Left colon (tissue), 2 donors: ENCODE measurements at regions of chr1 and their contacts with region 1.

Region 1: DNA sequence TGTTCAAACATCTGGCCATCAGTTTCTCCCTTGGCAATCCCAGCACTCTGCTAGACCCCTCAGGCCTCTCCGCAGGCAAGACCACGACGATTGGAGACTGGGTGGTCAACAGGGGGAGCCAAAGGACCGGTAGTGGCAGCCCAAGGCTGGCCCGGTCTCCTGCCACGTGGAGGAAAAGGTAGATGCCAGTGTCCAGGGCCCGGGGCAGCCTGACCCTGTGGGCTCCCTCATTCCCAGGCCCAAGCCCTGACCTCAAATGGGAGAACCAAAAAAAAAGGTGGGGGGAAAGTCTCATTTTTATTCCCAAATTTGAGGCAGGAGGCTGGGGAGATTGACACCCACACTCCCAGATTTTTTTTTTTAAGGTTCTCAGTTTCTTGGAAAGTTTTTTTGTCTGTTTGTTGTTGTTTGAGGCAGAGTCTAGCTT is 24.8 kb downstream of the S100A6 start:
- DNase-seq: peak; percentile 83 to 90
- ATAC-seq: peak; percentile 60

Region 2: DNA sequence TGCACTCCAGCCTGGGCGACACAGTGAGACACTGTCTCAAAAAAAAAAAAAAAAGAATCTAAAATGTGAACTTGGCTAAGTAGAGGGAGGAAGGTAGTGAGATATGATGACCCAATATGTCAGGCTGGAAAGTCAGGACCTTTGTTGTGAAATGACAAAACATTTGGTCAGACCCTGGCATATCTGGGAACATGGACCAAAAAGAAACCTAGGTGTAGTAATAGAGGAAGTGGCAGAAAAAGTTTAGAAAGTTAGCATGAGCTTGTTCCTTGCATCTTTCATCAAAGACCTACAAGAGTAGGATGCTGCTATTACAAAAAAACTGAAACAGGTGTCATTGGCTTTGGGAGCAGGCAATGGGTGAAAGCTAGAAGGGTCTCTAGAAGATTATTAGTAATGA is 45.4 kb after region 1 on chr1:
- intact Hi-C with region 1: no loop called
- DNase-seq: no peak
- ATAC-seq: no peak

Region 3: DNA sequence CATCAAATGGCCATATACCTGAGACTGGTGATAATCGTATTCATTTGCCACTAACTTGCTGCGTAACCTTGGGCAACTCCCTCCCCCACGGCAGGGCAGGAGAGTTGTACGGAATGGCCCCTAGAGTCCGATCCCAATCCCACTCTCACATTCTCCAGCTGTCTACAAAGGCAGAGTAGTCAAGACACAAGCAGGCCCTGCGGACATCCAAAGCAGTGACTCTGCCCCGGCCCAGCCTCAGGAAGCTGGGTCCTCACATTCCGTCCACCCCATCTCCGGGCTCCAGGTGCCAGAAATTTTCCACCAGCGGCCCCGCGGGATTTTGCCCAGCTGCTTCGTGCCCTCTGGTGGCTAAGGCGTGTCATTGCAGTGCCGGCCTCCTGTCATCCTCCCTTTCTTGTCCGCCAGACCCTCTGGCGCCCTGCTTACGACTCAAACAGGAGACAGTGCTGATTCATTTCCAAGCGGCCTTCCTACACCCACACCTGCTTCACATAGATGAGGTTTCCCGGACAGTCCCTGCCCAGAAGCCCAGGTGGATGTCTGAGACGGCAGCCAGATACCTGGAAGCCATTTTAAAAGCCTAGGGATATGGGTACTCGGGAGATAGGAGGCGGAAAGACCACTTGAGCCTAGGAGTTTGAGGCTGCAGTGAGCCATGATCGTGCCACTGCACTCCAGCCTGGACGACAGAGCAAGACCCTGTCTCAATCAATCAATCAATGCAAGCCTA is 57.5 kb after region 1 on chr1:
- intact Hi-C with region 1: loop called in 1 of 2 experiments (anchors 2 kb)
- DNase-seq: peak; percentile 85 to 93
- ATAC-seq: peak; percentile 27

Region 4: DNA sequence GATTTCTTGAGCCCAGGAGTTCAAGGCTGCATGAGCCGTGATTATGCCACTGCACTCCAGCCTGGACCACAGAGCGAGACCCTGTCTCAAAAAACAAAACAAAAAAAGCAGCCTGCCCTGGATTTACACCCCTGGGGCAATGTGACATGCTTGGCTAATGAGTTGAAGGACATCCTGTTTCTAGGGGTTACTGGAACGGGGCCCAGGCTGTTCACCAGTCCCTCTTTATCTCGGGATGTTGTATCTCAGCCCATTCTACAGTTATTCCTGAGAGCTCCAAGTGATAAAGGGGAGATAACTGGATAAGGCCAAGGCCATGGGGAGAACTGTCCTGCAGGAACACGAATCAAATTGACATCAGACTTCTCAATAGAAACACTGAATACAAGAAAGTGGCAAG is 76.3 kb after region 1 on chr1:
- intact Hi-C with region 1: no loop called
- DNase-seq: no peak
- ATAC-seq: no peak

Region 5: GRCh38 chr1:153749408-153750005 is 238.5 kb after region 1 on chr1:
- intact Hi-C with region 1: loop called in 1 of 2 experiments (anchors 10 kb)
- DNase-seq: peak; percentile 79 to 86
- ATAC-seq: peak; percentile 93